ENCODE measurements at regions of chr7 and their contacts with region 1.

Region 1: GRCh38 chr7:124152859-124153692 is 120.2 kb upstream of the TMEM229A start:
- DNase-seq: peak in 2 of 10 donors; percentile 4 to 14
- H3K4me3 ChIP-seq: no peak overlapping the region
- H3K27ac ChIP-seq: peak overlapping the region in 2 of 59 donors; percentile 5 to 28
- H3K27me3 ChIP-seq: no peaks in the 10 kb centered on the region
- CTCF ChIP-seq: peak in 55 of 56 donors; percentile 24 to 72 (median 53)

Region 2: DNA sequence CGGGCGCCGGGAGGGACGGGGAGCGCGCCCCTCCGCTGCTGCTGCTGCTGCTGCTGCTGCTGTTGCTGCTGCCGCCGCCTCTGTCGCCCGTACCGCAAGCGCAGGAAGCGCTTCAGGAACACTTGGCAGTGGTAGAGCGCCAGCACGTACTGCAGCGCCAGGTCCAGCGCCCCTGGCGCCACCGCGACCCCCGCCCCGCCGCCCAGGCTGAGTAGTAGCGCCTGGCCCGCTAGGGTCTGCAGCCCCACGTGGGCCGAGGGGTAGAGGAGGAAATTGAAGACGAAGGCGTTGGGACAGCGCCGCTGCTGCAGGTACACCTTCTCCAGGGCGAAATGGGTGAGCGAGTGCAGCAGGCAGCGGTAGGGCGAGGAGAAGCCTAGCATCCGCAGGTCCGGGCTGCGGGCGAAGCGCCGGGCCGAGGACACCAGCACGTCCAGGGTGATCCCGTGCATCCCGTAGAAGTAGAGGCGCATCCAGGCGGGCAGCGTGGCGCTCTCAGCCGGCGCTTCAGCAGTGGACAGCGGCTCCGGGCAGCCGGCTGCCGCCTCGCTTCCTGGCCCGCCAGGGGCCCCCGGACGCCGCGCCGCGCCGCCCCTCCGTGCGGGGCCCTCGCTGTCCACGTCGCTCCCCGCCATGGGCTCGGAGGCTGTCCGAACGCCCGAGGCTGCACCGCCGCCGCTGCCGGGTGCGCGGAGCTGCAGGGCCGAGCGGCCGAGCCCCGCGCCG is 120.5 kb before region 1 on chr7 and contains the start of gene TMEM229A:
- intact Hi-C with region 1: loop called in 1 of 2 experiments (anchors 5 kb)
- DNase-seq: peak; percentile 37 to 75 (median 60)
- H3K4me3 ChIP-seq: peak within 1 kb of the TSS; percentile 61 to 93 (median 84)
- H3K27ac ChIP-seq: peak within 1 kb of the TSS; percentile 92 to 100 (median 98)
- H3K27me3 ChIP-seq: no peaks in the 10 kb centered on the region
- CTCF ChIP-seq: peak in 28 of 56 donors; percentile 3 to 52 (median 23)
- total RNA-seq, gene TMEM229A: 4.5 to 16.4 (median 9.0) TPM

Region 3: DNA sequence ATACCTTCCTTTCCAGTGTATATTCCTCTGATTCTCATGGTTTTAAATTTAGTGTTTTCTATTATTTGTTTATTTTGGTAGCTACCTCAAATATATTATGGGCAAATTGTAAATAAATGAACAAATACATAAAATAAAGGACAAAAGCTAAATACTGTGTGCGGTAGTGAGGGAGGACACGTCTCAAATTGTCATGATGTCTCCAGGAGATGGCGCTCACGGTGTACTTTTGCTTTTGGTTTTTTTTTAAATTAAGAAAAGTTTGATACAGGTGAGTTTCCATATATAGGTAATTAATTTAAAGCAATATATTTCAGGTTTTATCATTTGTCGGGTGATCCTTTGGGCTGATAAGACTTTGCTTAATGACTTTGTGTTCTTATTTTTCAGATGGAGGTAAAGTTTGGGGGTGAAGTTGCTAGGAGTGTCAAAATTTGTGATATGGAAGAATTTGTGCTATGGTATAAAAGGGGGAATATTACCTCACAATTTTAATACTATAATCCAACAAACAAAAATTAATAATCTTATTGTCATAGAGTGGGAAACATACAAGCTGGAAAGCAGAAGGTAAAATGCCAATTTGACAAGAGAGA is 51.8 kb before region 1 on chr7:
- intact Hi-C with region 1: loop called in 1 of 2 experiments (anchors 2 kb)
- DNase-seq: no peak
- H3K4me3 ChIP-seq: no peak overlapping the region
- H3K27ac ChIP-seq: no peak overlapping the region
- H3K27me3 ChIP-seq: no peaks in the 10 kb centered on the region
- CTCF ChIP-seq: peak in 55 of 56 donors; percentile 10 to 76 (median 62)

Region 4: GRCh38 chr7:124784879-124785818 is 632.1 kb after region 1 on chr7:
- intact Hi-C with region 1: loop called in 1 of 2 experiments (anchors 5 kb)
- DNase-seq: peak in 9 of 10 donors; percentile 48 to 64 (median 63)
- H3K4me3 ChIP-seq: peak overlapping the region in 3 of 59 donors; percentile 8 to 15 (median 10)
- H3K27ac ChIP-seq: no peak overlapping the region
- H3K27me3 ChIP-seq: no peaks in the 10 kb centered on the region
- CTCF ChIP-seq: peak; percentile 59 to 99 (median 88)

Region 5: GRCh38 chr7:124856299-124856888 is 703.3 kb after region 1 on chr7:
- intact Hi-C with region 1: loop called (anchors 5 to 10 kb)
- DNase-seq: no peak
- H3K4me3 ChIP-seq: no peak overlapping the region
- H3K27ac ChIP-seq: no peak overlapping the region
- H3K27me3 ChIP-seq: no peaks in the 10 kb centered on the region
- CTCF ChIP-seq: peak; percentile 59 to 88 (median 75)